ENCODE measurements at regions of chr15 and their contacts with region 1.

Region 1: GRCh38 chr15:77496710-77497103 is 76.0 kb downstream of the HMG20A start:
- DNase-seq: peak; percentile 88 to 92 (median 90)
- ATAC-seq: peak; percentile 77 to 85 (median 82)
- H3K4me3 ChIP-seq: peak overlapping the region in 9 of 12 donors; percentile 8 to 39 (median 22)
- H3K27ac ChIP-seq: peak overlapping the region; percentile 53 to 96 (median 90)
- H3K4me1 ChIP-seq: peaks cover 3 to 85% (median 67%) of the 10 kb centered on the region in 12 donors
- H3K27me3 ChIP-seq: no peaks in the 10 kb centered on the region
- CTCF ChIP-seq: peak; percentile 92 to 98 (median 96)
- POLR2A ChIP-seq: no peak

Region 2: GRCh38 chr15:77112838-77113504 is 383.7 kb before region 1 on chr15:
- intact Hi-C with region 1: loop called in 8 of 10 experiments (anchors 2 to 10 kb)
- DNase-seq: no peak
- ATAC-seq: peak in 3 of 4 donors; percentile 30 to 72 (median 37)
- H3K4me3 ChIP-seq: no peak overlapping the region
- H3K27ac ChIP-seq: peak overlapping the region in 1 of 12 donors; percentile 1
- H3K4me1 ChIP-seq: peaks cover 0 to 34% (median 14%) of the 10 kb centered on the region in 12 donors
- H3K27me3 ChIP-seq: no peaks in the 10 kb centered on the region
- CTCF ChIP-seq: peak in 1 of 12 donors; percentile 12
- POLR2A ChIP-seq: no peak

Region 3: DNA sequence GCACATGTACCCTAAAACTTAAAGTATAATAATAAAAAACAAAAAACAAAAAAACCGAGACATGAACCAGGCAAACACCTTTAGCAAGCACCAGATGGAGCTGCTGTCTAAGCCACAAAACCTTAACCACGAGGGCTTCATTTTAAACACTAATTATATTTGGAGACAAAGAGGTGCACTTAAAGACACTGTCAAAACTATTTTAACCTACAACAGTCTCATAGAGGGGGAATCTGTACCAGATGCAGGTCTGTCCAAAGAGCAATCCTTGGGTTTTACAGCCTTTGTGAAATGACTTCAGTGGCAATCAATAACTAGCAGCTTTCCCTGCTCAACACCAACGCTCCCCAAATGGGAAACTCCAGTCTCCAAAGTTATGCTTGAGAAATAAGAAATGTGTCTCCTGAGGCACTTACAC is 310.1 kb before region 1 on chr15:
- intact Hi-C with region 1: loop called in 9 of 10 experiments (anchors 1 to 5 kb)
- DNase-seq: no peak
- ATAC-seq: peak in 3 of 4 donors; percentile 24 to 53 (median 33)
- H3K4me3 ChIP-seq: no peak overlapping the region
- H3K27ac ChIP-seq: peak overlapping the region; percentile 42 to 93 (median 86)
- H3K4me1 ChIP-seq: peaks cover 3 to 66% (median 49%) of the 10 kb centered on the region in 12 donors
- H3K27me3 ChIP-seq: no peaks in the 10 kb centered on the region
- CTCF ChIP-seq: peak; percentile 40 to 76 (median 64)
- POLR2A ChIP-seq: no peak

Region 4: DNA sequence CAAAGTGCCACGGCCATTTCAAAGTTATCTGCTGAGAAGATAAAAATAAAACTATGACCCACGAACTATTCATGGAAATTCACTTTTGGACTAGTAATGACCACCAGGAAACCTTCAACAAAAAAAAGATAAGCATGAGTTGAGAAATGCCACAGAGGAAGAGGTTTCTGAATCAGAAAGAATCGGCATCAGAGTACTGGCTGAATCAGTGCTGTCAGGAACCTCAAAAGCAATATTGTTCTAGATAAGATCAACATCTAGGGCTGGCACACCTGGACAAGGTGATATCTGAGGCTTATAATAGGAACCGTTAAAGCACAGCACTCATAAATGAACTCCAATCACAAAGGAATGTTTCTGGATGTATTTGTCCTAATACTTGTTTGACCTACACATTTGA is 149.5 kb before region 1 on chr15:
- intact Hi-C with region 1: loop called in 1 of 10 experiments (anchors 5 kb)
- DNase-seq: no peak
- ATAC-seq: peak in 2 of 4 donors; percentile 15 to 34
- H3K4me3 ChIP-seq: no peak overlapping the region
- H3K27ac ChIP-seq: peak overlapping the region in 5 of 12 donors; percentile 16 to 57 (median 27)
- H3K4me1 ChIP-seq: peaks cover 0 to 53% (median 29%) of the 10 kb centered on the region in 12 donors
- H3K27me3 ChIP-seq: no peaks in the 10 kb centered on the region
- CTCF ChIP-seq: no peak
- POLR2A ChIP-seq: no peak